ENCODE measurements at regions of chr16 and their contacts with region 1.

Region 1: GRCh38 chr16:3503523-3503922 is 2.7 kb downstream of the CLUAP1 start:
- DNase-seq: no peak
- H3K4me3 ChIP-seq: no peak overlapping the region
- H3K27ac ChIP-seq: no peak overlapping the region
- H3K4me1 ChIP-seq: peaks cover 5% of the 10 kb centered on the region
- H3K27me3 ChIP-seq: no peaks in the 10 kb centered on the region
- CTCF ChIP-seq: no peak
- POLR2A ChIP-seq: no peak

Region 2: DNA sequence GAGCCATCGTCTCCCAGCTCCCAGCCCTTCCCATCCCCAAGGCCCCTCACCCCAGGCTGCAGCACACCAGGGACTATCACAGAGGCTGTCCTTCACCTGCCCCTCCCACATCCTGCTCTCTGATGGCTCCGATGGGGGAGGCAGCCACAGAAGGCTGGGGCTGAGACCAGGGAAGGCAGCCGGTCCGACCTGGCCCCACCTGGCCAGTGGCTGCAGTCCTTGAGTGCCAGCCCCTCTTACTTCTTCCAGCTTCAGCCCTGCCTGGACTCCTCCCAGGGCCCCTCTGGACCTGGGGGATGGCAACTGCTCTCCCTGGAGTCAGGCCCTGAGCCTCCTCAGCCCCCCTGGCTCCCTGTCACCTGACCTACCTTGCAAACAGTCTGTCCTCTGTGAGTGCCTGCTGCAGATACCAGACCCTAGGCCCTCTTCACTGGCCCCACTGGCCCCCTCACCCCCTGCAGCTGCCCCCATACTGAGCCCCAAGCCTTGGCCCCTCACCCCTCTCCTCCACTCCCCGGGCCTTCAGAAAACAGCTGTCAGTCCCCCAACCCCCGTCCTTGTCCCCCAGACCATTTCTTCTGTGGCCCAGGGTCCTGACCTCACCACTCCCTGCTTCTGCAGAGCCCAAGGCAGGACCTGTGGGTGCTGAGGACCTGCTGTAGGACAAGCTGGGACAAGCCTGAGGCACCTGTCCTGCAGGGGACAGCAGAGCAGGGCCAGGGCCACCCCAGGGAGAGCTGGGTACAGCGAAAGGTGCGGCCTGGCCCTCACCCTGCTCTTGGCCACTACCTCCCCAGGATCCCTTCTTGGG is 763.7 kb before region 1 on chr16:
- CTCF ChIA-PET with region 1: no interaction called
- POLR2A ChIA-PET with region 1: no interaction called
- dilution Hi-C with region 1: no loop called
- intact Hi-C with region 1: no loop called
- DNase-seq: no peak
- H3K4me3 ChIP-seq: no peak overlapping the region
- H3K27ac ChIP-seq: no peak overlapping the region
- H3K4me1 ChIP-seq: no peaks in the 10 kb centered on the region
- H3K27me3 ChIP-seq: no peaks in the 10 kb centered on the region
- CTCF ChIP-seq: no peak
- POLR2A ChIP-seq: no peak

Region 3: GRCh38 chr16:3150346-3151218 is 352.9 kb before region 1 on chr16:
- CTCF ChIA-PET with region 1: interaction called, 3 read pairs
- POLR2A ChIA-PET with region 1: no interaction called
- dilution Hi-C with region 1: no loop called
- intact Hi-C with region 1: loop called (anchors 5 kb)
- DNase-seq: peak; percentile 98
- H3K4me3 ChIP-seq: peak overlapping the region; percentile 68 to 80 (median 69)
- H3K27ac ChIP-seq: peak overlapping the region; percentile 37
- H3K4me1 ChIP-seq: peaks cover 10% of the 10 kb centered on the region
- H3K27me3 ChIP-seq: no peaks in the 10 kb centered on the region
- CTCF ChIP-seq: no peak
- POLR2A ChIP-seq: peak; percentile 33

Region 4: DNA sequence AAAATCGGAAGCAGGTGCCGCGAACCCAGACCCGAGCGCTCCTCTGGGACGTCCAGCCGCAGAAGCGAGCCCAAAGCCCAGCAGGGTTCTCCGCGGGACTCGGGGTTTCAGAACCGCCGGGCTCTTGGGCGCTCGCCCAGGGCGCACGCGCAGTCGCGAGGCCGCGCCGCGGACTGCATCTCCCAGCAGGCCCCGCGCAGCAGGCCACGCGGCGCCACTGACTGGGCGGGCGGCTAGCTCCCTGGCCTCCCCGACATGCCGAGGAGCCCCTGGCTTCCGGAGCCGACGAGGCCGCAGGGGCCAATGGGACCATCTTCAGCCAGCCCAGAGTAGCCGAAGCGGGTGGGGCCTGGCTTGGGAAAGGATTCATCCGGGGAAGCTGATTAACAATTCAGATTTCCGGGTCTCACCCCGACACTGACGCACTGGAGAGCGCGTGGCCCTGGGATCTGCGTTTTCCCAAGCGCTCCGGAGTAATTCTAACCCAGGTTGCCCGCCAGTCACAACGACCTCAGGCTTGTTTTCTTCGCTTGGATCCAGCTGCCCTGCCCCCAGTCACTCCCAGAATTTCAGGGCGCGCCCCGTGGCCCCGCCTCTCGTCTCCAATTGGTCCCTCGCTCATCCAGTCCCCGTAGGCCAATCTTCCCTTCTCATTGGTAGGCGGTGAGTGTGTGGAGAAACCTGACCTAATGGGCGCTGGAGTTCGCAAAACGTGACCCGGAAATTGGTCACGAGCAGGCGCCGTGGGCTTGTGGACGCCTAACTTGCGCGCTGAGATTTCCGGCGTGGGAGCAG is 220.6 kb before region 1 on chr16 and contains the start of gene ZNF263:
- CTCF ChIA-PET with region 1: interaction called, 4 read pairs
- POLR2A ChIA-PET with region 1: interaction called, 7 read pairs
- dilution Hi-C with region 1: no loop called
- intact Hi-C with region 1: loop called (anchors 1 kb)
- DNase-seq: peak; percentile 98
- H3K4me3 ChIP-seq: peak within 1 kb of the TSS; percentile 74 to 79 (median 77)
- H3K27ac ChIP-seq: peak within 1 kb of the TSS; percentile 92
- H3K4me1 ChIP-seq: peaks cover 13% of the 10 kb centered on the region
- H3K27me3 ChIP-seq: peaks cover 2 to 6% of the 10 kb centered on the region in 2 experiments
- CTCF ChIP-seq: no peak
- POLR2A ChIP-seq: peak; percentile 75
- total RNA-seq, gene ZNF263: 20.8 and 22.7 TPM in 2 replicates

Region 5: DNA sequence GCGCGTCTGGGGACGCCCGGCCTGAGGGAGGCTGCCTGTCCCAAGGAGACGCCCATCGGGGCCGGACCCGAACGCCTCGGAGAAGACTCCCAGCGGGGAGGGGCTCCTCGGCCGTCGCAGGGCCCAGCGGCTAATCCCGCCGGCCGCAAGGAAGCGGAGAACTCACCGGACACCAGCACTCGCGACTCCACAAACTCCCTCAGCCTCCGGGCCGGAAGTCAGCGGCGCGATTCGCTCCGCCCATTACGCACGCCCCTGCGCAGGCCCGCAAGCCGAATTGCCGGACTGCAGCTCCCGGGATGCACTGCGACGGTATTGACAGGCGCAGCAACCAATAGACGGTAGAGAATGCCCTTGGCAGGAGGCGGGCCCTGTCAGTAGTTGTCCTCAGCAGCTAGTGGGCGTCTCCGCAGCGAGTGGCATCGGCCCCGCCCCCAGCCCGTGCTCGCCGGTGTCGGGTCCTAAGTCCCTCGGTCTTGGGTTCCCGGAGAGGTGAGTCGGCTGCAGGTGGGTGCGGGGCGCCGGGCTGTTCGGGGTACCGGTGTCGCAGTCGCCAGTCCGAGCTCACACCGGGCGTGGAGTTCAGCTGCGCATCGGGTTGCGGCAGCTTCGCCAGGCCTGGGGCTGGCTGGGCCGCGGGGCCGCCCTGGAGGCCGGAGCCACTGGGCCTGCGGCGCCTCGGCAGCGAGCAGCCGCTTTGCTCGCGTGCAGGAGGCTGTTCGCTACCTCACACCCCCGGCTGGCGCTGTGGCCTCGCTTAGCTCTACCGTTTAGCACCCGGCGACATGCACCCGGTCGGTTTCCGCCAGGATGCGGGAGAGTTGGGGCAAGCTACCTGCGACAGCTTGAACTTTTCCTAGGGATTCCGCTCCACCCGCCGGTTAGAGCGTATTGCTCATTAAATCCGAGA is 102.5 kb before region 1 on chr16 and contains the starts of genes ZNF174 and ZSCAN32:
- CTCF ChIA-PET with region 1: interaction called, 7 read pairs
- POLR2A ChIA-PET with region 1: interaction called, 3 read pairs
- dilution Hi-C with region 1: no loop called
- intact Hi-C with region 1: loop called (anchors 1 kb)
- DNase-seq: peak; percentile 100
- H3K4me3 ChIP-seq: peak within 1 kb of the TSS; percentile 66 to 87 (median 82)
- H3K27ac ChIP-seq: peak within 1 kb of the TSS; percentile 42
- H3K4me1 ChIP-seq: peaks cover 13% of the 10 kb centered on the region
- H3K27me3 ChIP-seq: no peaks in the 10 kb centered on the region
- CTCF ChIP-seq: peak in 1 of 2 donors; percentile 1
- POLR2A ChIP-seq: peak; percentile 94
- total RNA-seq, gene ZNF174: 7.4 and 9.1 TPM in 2 replicates
- total RNA-seq, gene ZSCAN32: 10.9 and 13.1 TPM in 2 replicates

Measured in endothelial cell of umbilical vein (primary cell).